Caco-2 (cell line): ENCODE measurements at regions of chr4 and their contacts with region 1.

Region 1: DNA sequence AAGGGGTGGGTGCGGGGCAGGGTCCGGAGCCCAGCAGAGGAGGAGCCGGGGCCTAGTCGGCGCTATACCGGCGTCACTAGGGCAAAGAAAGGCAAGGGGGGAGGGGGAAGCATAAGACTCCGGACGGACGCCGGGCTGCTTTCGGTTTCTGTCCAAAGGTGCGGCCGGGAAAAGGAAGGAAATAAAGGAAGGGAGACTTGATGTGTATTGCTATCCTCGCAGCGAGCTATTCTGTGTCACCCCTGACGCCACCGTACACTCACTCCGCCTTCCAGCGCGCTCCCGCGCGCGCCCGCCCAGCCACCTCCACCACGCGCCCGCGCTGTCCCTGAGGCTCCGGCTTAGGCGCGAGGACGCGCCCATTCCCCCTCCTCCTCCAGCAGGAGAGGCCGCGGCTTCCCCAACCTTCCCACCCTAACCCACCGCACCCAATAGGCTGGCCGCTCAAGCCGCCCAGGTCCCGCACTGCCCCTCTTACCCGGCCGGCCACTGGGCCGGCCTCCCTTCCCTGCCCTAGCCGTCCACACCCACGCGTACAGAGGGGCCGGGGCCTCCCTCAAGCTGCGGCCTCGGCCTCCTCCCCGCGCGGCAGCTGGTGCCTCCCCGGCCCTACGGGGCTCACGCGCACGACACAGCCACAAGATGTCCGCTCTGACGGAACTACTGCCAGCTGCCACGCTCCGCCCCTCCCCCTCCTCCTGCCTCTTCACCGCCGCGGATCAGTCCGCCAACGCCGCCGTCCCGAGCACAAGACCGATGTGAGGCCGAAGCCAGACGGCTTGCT is at the start of gene UBE2D3:
- DNase-seq: peak; percentile 94
- H3K4me3 ChIP-seq: peak within 1 kb of the TSS; percentile 92
- H3K4me3 Mint-ChIP-seq: no peak within 1 kb of the TSS
- H3K27ac Mint-ChIP-seq: no peak within 1 kb of the TSS
- H3K4me1 ChIP-seq: peaks cover 25% of the 10 kb centered on the region
- H3K4me1 Mint-ChIP-seq: peaks cover 5% of the 10 kb centered on the region
- H3K27me3 ChIP-seq: no peaks in the 10 kb centered on the region
- H3K27me3 Mint-ChIP-seq: no peaks in the 10 kb centered on the region
- CTCF ChIP-seq: no peak
- total RNA-seq, gene UBE2D3: 294 and 305 TPM in 2 replicates

Region 2: GRCh38 chr4:101347557-101348366 is 1479.3 kb before region 1 on chr4:
- CTCF ChIA-PET with region 1: no interaction called
- POLR2A ChIA-PET with region 1: no interaction called
- intact Hi-C with region 1: loop called (anchors 5 kb)
- DNase-seq: peak; percentile 98
- H3K4me3 ChIP-seq: peak overlapping the region; percentile 92
- H3K4me3 Mint-ChIP-seq: peak overlapping the region; percentile 95
- H3K27ac Mint-ChIP-seq: peak overlapping the region; percentile 85
- H3K4me1 ChIP-seq: peaks cover 26% of the 10 kb centered on the region
- H3K4me1 Mint-ChIP-seq: peaks cover 15% of the 10 kb centered on the region
- H3K27me3 ChIP-seq: no peaks in the 10 kb centered on the region
- H3K27me3 Mint-ChIP-seq: no peaks in the 10 kb centered on the region
- CTCF ChIP-seq: no peak

Region 3: DNA sequence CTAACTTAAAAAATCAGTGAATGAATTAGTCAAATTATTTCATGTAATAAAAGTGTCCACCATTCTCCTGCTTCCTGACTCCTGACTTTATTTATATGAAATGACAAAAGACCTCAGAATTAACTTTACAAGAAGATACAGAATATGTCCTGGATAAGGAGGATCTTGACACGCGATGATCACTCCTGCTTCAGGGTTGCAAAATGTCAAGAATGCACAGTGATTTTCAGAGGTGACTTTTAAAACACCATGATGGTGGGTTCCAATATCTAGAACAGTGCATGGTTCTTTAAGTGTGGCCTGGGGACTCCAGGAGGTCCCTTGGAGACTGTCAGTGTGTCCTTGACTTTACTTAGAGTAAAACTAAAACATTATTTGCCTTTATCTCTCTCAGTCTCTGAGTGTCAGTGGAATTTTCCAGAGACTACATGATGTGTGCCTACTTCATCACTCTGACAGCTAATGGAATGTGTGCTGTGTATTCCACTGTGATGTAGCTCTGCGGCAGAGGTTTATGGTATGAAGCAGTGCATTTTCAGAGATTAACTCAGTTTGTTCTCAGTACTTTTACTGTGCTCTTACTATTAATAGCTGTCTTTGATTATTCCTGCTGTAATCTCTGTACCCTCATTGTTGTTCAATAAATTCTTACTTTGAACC is 152.1 kb before region 1 on chr4:
- CTCF ChIA-PET with region 1: no interaction called
- POLR2A ChIA-PET with region 1: no interaction called
- intact Hi-C with region 1: loop called (anchors 1 kb)
- DNase-seq: peak; percentile 68 to 69
- H3K4me3 ChIP-seq: no peak overlapping the region
- H3K4me3 Mint-ChIP-seq: no peak overlapping the region
- H3K27ac Mint-ChIP-seq: peak overlapping the region; percentile 87
- H3K4me1 ChIP-seq: peaks cover 60% of the 10 kb centered on the region
- H3K4me1 Mint-ChIP-seq: peaks cover 15% of the 10 kb centered on the region
- H3K27me3 ChIP-seq: no peaks in the 10 kb centered on the region
- H3K27me3 Mint-ChIP-seq: no peaks in the 10 kb centered on the region
- CTCF ChIP-seq: no peak

Region 4: DNA sequence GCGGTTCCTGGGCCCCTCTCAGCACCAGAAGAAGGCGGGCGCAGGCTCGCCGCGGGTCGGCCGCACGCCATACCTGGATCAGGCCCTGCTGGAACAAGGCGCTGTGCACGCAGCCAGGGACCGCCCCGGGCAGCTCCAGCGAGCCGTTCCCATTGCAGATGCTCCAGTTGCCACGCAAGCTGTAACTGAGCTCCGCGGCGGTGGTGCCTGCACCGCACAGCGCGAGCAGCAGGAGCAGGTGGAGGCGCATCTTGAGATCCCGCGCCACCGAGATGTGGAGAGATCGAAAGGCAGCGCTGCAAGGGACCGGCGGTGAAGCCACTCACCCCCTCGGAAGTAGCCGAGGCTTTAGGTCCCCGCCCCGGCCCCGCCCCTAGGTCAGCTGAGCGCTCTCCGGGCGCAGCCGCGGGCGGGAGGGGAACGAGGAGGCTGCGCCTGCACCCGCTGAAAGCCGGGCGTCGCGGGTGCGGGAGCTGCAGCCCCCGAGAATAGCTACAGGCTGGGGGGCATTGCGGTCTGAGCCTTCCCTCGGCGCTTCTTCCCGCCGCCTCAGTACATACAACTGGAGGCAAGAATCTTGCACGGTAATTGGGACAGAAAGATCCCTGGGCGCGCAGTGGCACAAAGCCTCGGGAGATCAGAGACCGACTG is 66.3 kb before region 1 on chr4 and contains the start of gene MANBA:
- CTCF ChIA-PET with region 1: interaction called, 3 read pairs
- POLR2A ChIA-PET with region 1: interaction called, 19 read pairs
- intact Hi-C with region 1: loop called (anchors 2 kb)
- DNase-seq: peak; percentile 82
- H3K4me3 ChIP-seq: peak within 1 kb of the TSS; percentile 83
- H3K4me3 Mint-ChIP-seq: peak within 1 kb of the TSS; percentile 80
- H3K27ac Mint-ChIP-seq: peak within 1 kb of the TSS; percentile 76
- H3K4me1 ChIP-seq: peaks cover 7% of the 10 kb centered on the region
- H3K4me1 Mint-ChIP-seq: peaks cover 19% of the 10 kb centered on the region
- H3K27me3 ChIP-seq: no peaks in the 10 kb centered on the region
- H3K27me3 Mint-ChIP-seq: no peaks in the 10 kb centered on the region
- CTCF ChIP-seq: no peak
- total RNA-seq, gene MANBA: 52.1 and 53.5 TPM in 2 replicates

Region 5: DNA sequence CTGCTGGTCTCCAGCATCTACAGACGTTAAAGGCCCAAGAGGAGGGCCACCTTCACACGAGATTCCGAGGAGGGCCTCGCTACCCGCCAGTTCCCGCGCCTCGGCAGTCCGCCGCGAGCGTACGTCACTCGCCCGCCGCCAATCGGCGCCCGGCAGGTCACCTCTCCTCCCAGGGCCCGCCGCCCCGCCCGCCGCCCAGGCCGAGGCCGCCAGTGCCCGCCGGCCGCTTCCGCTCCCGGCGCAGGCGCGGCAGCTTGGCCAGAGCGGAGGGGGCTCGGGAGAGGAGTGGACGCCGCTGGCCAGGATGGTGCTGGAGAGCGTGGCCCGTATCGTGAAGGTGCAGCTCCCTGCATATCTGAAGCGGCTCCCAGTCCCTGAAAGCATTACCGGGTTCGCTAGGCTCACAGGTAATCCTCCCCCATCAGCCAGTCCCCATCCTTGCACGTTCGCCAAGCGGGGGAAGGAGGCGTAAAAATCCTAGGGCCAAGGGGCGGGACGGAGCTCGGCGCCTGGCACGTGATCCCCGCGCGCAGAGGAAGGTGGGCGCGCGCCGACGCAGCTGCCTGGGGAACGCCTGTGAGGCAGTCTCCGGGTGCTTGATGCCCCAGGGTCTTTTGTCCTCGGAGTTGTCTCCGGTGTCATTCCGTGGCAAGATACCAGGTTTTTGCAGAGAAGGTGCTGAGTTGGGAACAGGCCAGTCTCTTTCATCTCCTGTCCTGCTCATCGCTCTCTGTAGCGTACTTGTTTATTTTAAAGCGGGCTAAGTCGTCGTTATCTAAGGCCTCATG is 41.9 kb after region 1 on chr4 and contains the start of gene CISD2:
- CTCF ChIA-PET with region 1: interaction called, 5 read pairs
- POLR2A ChIA-PET with region 1: interaction called, 72 read pairs
- intact Hi-C with region 1: loop called (anchors 1 kb)
- DNase-seq: peak; percentile 93 to 95
- H3K4me3 ChIP-seq: peak within 1 kb of the TSS; percentile 84
- H3K4me3 Mint-ChIP-seq: peak within 1 kb of the TSS; percentile 97
- H3K27ac Mint-ChIP-seq: peak within 1 kb of the TSS; percentile 95
- H3K4me1 ChIP-seq: 0 out of 2 replicates have a peak, but pooled peaks cover 3% of the 10 kb centered on the region
- H3K4me1 Mint-ChIP-seq: peaks cover 6% of the 10 kb centered on the region
- H3K27me3 ChIP-seq: no peaks in the 10 kb centered on the region
- H3K27me3 Mint-ChIP-seq: no peaks in the 10 kb centered on the region
- CTCF ChIP-seq: no peak
- total RNA-seq, gene CISD2: 54.0 and 58.6 TPM in 2 replicates

Region 6: DNA sequence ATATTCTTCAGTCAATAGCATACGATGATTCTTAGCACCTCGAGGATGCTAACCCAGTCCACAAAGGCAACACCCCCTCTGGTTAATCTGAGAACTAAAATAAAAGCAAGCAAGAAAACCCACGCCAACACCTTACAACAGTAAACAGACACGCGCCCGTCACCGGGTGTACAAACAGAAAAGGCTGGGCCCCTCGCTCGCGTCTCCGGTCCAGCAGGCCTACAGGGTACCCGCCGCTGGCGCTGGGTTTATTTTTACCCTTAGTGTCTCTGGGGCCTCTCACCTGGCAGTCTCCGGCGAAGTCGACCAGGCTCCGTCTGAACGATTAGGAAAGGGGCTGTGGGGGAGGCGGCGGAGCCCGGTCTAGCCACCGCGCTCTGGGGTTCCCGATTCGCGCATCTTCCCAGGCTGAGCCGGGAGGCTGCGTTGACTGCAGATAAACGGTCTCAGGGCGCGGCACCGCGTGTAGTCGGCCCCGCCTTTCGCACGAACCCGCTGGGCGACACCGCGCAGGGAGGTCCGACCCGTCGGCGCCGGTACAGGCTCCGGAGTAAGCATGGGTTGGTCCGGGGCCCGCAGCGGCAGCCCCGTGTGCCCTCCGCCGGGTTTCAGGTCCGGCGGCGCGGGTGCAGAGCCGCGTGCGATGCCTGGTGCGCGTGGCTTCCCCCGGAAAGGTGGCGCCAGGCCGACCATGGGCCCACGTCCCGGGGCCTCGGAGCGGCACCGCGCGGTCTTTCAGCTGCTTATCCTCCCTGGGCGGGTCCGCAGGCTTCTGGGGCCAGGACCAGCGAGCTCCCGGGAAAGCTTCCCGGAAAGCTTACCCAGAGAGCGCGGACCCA is 249.0 kb after region 1 on chr4:
- CTCF ChIA-PET with region 1: no interaction called
- POLR2A ChIA-PET with region 1: no interaction called
- intact Hi-C with region 1: loop called (anchors 5 kb)
- DNase-seq: peak; percentile 48 to 67
- H3K4me3 ChIP-seq: peak overlapping the region; percentile 88
- H3K4me3 Mint-ChIP-seq: peak overlapping the region; percentile 77
- H3K27ac Mint-ChIP-seq: peak overlapping the region; percentile 58
- H3K4me1 ChIP-seq: peaks cover 15% of the 10 kb centered on the region; the same call in 1 of the 2 replicates
- H3K4me1 Mint-ChIP-seq: peaks cover 6% of the 10 kb centered on the region
- H3K27me3 ChIP-seq: no peaks in the 10 kb centered on the region
- H3K27me3 Mint-ChIP-seq: no peaks in the 10 kb centered on the region
- CTCF ChIP-seq: no peak